ENCODE measurements at regions of chr7 and their contacts with region 1.

Region 1: GRCh38 chr7:30074422-30075030 is 46.3 kb downstream of the PLEKHA8 start:
- DNase-seq: peak in 1 of 2 experiments; percentile 49
- ATAC-seq: peak; percentile 50 to 75; a peak in 3 of 6 replicates
- H3K4me3 ChIP-seq: no peak overlapping the region
- H3K27ac ChIP-seq: no peak overlapping the region
- H3K4me1 ChIP-seq: no peaks in the 10 kb centered on the region
- CTCF ChIP-seq: peak; percentile 78
- EP300 ChIP-seq: no peak
- POLR2A ChIP-seq: no peak
- RAD21 ChIP-seq: peak; percentile 56

Region 2: GRCh38 chr7:29878081-29878688 is 196.3 kb before region 1 on chr7:
- CTCF ChIA-PET with region 1: interaction called, 11 read pairs
- POLR2A ChIA-PET with region 1: no interaction called
- DNase-seq: peak; percentile 39 to 46
- ATAC-seq: peak; percentile 52 to 83; a peak in 3 of 6 replicates
- H3K4me3 ChIP-seq: no peak overlapping the region
- H3K27ac ChIP-seq: no peak overlapping the region
- H3K4me1 ChIP-seq: no peaks in the 10 kb centered on the region
- CTCF ChIP-seq: peak; percentile 77
- EP300 ChIP-seq: no peak
- POLR2A ChIP-seq: no peak
- RAD21 ChIP-seq: peak; percentile 73 to 81

Region 3: DNA sequence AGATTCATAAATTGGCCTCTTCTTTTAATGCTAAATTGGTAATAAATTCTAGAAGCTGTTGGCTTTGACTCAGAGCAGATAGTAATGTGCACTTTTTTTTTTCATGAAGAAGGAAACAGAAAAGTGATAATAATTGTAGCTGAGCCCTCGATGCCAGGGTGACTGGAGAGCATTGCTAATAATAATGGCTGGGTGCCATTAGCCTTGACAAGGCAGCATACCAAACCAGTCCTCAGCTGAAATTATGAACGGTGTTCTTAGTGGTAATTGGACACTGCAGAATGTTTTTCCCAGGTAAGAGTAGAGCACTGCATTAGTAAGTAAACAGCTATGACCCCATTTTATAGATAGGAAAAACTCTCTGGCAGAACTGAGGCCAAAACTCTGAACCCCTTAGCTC is 27.4 kb before region 1 on chr7:
- CTCF ChIA-PET with region 1: interaction called, 11 read pairs
- POLR2A ChIA-PET with region 1: no interaction called
- DNase-seq: no peak
- ATAC-seq: no peak
- H3K4me3 ChIP-seq: no peak overlapping the region
- H3K27ac ChIP-seq: no peak overlapping the region
- H3K4me1 ChIP-seq: no peaks in the 10 kb centered on the region
- CTCF ChIP-seq: no peak
- EP300 ChIP-seq: no peak
- POLR2A ChIP-seq: no peak
- RAD21 ChIP-seq: no peak

Region 4: GRCh38 chr7:30087371-30087770 is 12.8 kb after region 1 on chr7:
- CTCF ChIA-PET with region 1: interaction called, 30 read pairs
- POLR2A ChIA-PET with region 1: no interaction called
- DNase-seq: no peak
- ATAC-seq: no peak
- H3K4me3 ChIP-seq: no peak overlapping the region
- H3K27ac ChIP-seq: no peak overlapping the region
- H3K4me1 ChIP-seq: peaks cover 9% of the 10 kb centered on the region; the same call in 1 of the 3 replicates
- CTCF ChIP-seq: no peak
- EP300 ChIP-seq: no peak
- POLR2A ChIP-seq: no peak
- RAD21 ChIP-seq: no peak

Measured in A549 (cell line).